Ovary (tissue), 10 donors: ENCODE measurements at regions of chr4 and their contacts with region 1.

Region 1: DNA sequence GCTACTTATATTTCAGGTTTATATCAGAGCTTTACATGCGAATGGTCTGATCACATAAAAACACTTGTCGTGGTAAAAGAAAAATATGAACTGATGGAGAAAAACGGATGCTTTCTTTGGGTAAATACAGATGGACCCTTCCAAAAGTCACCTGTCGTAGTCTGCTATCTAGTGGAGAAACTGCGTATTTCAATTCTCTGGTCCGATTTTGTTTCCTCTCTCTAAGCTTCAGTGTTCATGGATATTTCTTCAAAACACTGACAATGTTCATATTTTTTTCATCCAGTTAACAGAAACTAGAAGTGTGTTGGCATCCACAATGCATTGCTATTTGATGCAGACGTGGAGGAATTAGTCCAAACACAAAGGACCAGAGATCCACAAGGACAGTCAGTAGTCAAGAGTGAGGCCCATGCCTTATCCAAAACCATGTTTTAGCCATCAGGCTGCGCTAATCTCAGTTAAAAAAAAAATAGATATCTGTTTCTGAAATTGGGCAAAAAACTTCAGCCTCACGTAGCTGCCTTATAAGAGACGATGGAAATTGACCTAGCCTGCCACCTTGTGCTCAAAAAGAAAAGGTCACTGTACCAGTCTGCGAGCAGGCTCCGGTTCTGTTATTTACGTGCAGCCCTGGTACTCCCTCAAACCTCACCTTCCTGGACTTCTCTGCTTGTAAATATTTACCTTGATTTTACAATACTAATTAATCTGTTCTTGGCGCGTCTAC is 16.0 kb downstream of the MEPE start:
- DNase-seq: peak in 4 of 5 donors; percentile 24 to 53 (median 26)
- H3K4me3 ChIP-seq: peak overlapping the region; percentile 18
- H3K27ac ChIP-seq: no peak overlapping the region
- H3K4me1 ChIP-seq: no peaks in the 10 kb centered on the region
- H3K27me3 ChIP-seq: no peaks in the 10 kb centered on the region
- CTCF ChIP-seq: peak in 2 of 3 donors; percentile 18 to 41
- EP300 ChIP-seq: no peak
- POLR2A ChIP-seq: no peak

Region 2: GRCh38 chr4:87363567-87363966 is 485.2 kb before region 1 on chr4:
- intact Hi-C with region 1: loop called in 1 of 4 experiments (anchors 10 kb)
- DNase-seq: no peak
- H3K4me3 ChIP-seq: no peak overlapping the region
- H3K27ac ChIP-seq: no peak overlapping the region
- H3K4me1 ChIP-seq: no peaks in the 10 kb centered on the region
- H3K27me3 ChIP-seq: no peaks in the 10 kb centered on the region
- CTCF ChIP-seq: no peak
- EP300 ChIP-seq: no peak
- POLR2A ChIP-seq: no peak

Region 3: GRCh38 chr4:87516683-87517082 is 332.1 kb before region 1 on chr4:
- intact Hi-C with region 1: no loop called
- DNase-seq: no peak
- H3K4me3 ChIP-seq: no peak overlapping the region
- H3K27ac ChIP-seq: no peak overlapping the region
- H3K4me1 ChIP-seq: peaks cover 9% of the 10 kb centered on the region
- H3K27me3 ChIP-seq: no peaks in the 10 kb centered on the region
- CTCF ChIP-seq: no peak
- EP300 ChIP-seq: no peak
- POLR2A ChIP-seq: no peak

Region 4: DNA sequence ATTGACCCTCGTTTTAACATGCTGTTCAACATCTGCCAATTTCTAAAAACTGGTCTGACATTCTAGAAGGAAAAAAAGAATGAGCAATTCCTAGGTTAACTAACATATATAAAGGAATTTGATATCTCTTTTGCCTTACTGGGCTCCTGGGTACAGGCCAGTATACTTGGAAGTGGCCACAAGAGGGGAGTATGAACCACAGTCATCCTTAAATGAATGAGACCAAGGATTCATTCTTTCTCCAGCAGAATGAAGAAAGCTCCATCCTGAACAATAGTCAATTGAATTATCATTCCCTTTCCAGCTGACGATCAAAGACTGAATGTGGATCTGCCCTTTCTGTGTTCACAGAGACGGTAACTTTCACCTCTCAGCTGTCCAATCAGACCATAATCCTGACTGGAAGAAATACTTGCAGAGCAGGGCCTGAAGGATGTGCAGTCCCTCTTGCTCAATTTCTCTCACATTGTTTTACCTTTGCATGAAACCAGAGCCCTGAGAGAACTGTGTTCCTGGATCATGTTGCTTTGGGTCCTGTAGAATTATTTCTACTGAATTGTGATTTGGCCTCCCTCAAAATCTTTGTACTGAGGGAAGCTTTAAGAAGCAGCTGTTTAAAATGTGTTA is 304.8 kb before region 1 on chr4:
- intact Hi-C with region 1: loop called in 2 of 4 experiments (anchors 5 to 10 kb)
- DNase-seq: no peak
- H3K4me3 ChIP-seq: no peak overlapping the region
- H3K27ac ChIP-seq: no peak overlapping the region
- H3K4me1 ChIP-seq: no peaks in the 10 kb centered on the region
- H3K27me3 ChIP-seq: no peaks in the 10 kb centered on the region
- CTCF ChIP-seq: peak in 2 of 3 donors; percentile 34 to 55
- EP300 ChIP-seq: no peak
- POLR2A ChIP-seq: no peak

Region 5: DNA sequence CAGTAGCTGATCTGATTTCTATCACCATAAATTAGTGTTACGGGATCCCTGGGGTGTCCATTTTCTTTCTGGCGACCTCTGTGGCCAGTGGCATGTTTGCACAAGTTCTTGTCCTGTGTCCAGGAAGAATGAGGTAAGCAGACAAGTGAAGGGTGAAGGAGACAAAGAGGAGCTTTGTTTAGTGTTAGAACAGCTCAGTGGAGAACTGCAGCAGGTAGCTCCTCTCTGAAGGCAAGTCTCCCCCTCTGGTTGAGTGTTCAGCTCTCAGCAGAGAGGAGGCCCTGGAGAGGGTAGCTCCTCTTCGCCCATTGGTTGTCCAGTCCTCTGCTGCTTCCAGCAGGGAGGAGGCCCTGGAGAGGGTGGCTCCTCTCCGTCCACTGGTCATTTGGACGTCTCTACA is 151.5 kb before region 1 on chr4:
- intact Hi-C with region 1: loop called in 1 of 4 experiments (anchors 10 kb)
- DNase-seq: no peak
- H3K4me3 ChIP-seq: no peak overlapping the region
- H3K27ac ChIP-seq: no peak overlapping the region
- H3K4me1 ChIP-seq: no peaks in the 10 kb centered on the region
- H3K27me3 ChIP-seq: no peaks in the 10 kb centered on the region
- CTCF ChIP-seq: no peak
- EP300 ChIP-seq: no peak
- POLR2A ChIP-seq: no peak

Region 6: DNA sequence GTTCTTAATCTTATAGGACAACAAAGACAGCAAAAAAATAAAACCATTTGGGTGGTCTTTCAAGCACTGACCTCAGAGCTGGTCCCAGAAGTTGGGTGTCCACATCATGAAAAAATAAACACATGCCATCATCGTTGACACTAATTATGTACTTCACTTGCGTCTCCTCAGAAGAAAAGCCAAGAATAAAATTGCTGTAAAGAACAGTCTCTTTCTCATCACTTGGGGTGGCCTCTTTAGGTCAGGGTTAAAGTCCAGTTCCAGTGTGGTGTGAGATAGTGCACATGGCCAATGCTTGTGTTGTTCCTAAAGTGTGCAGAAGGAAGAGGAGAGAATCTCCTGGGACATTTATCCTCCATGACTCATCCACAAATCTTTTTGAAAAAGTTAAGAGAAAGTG is 98.9 kb before region 1 on chr4:
- intact Hi-C with region 1: no loop called
- DNase-seq: no peak
- H3K4me3 ChIP-seq: no peak overlapping the region
- H3K27ac ChIP-seq: no peak overlapping the region
- H3K4me1 ChIP-seq: no peaks in the 10 kb centered on the region
- H3K27me3 ChIP-seq: no peaks in the 10 kb centered on the region
- CTCF ChIP-seq: no peak
- EP300 ChIP-seq: no peak
- POLR2A ChIP-seq: no peak

Region 7: GRCh38 chr4:87973283-87974169 is 124.7 kb after region 1 on chr4:
- intact Hi-C with region 1: loop called in 1 of 4 experiments (anchors 5 kb)
- DNase-seq: peak; percentile 37 to 64 (median 46)
- H3K4me3 ChIP-seq: no peak overlapping the region
- H3K27ac ChIP-seq: no peak overlapping the region
- H3K4me1 ChIP-seq: no peaks in the 10 kb centered on the region
- H3K27me3 ChIP-seq: no peaks in the 10 kb centered on the region
- CTCF ChIP-seq: peak in 2 of 3 donors; percentile 58 to 60
- EP300 ChIP-seq: no peak
- POLR2A ChIP-seq: no peak